B cell (primary cell): ENCODE measurements at regions of chr3 and their contacts with region 1.

Region 1: GRCh38 chr3:124688581-124689454 is 41.4 kb upstream of the UMPS start:
- DNase-seq: peak; percentile 72
- ATAC-seq: peak; percentile 58
- H3K4me3 ChIP-seq: no peak overlapping the region
- H3K4me3 Mint-ChIP-seq: no peak overlapping the region
- H3K27ac ChIP-seq: no peak overlapping the region
- H3K27ac Mint-ChIP-seq: no peak overlapping the region
- H3K4me1 ChIP-seq: no peaks in the 10 kb centered on the region
- H3K4me1 Mint-ChIP-seq: peaks cover 4% of the 10 kb centered on the region
- H3K27me3 ChIP-seq: peaks cover 0 to 4% (median 0%) of the 10 kb centered on the region in 4 experiments
- H3K27me3 Mint-ChIP-seq: peaks cover 28% of the 10 kb centered on the region
- CTCF ChIP-seq: peak; percentile 93

Region 2: DNA sequence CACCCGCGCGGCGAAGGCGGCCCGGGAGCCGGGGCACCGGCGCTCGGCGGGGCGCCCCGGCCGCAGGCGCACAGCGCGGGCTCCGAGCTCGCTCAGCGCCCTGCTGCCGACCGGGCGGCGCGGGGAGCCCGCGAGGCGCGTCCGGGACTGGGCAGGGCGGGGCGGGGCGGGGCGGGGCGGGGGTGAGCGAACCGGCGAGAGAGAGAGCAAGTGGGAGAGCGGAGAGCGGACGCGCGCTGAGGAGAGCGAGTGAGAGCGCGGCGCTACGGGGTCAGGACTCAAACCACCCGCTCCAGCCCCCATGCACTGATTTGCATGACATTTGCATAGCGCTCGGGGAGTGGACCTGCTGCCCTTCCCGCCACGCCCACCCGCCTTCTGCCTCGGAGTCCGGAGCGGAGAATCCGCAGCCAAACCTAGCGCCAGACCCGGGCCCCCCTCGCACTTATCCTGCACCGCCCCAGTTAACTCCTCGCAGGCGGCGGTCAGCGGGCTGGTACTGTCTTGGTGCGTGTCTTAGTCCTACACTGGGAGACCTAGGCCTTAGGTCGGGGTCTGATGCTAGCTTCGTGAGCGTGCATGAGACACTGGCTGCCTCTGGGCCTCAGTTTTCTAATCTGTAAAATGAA is 804.5 kb before region 1 on chr3 and contains the start of gene MYLK:
- CTCF ChIA-PET with region 1: no interaction called
- POLR2A ChIA-PET with region 1: no interaction called
- intact Hi-C with region 1: no loop called
- DNase-seq: peak; percentile 40
- ATAC-seq: peak; percentile 71
- H3K4me3 ChIP-seq: peak within 1 kb of the TSS in 3 of 5 experiments; percentile 14 to 29 (median 21)
- H3K4me3 Mint-ChIP-seq: peak within 1 kb of the TSS; percentile 83
- H3K27ac ChIP-seq: no peak within 1 kb of the TSS
- H3K27ac Mint-ChIP-seq: no peak within 1 kb of the TSS
- H3K4me1 ChIP-seq: peaks cover 8 to 16% of the 10 kb centered on the region in 2 donors
- H3K4me1 Mint-ChIP-seq: peaks cover 16% of the 10 kb centered on the region
- H3K27me3 ChIP-seq: peaks cover 0 to 36% (median 8%) of the 10 kb centered on the region in 4 experiments
- H3K27me3 Mint-ChIP-seq: peaks cover 43% of the 10 kb centered on the region
- CTCF ChIP-seq: no peak
- total RNA-seq, gene MYLK: not detected in 2 replicates

Region 3: DNA sequence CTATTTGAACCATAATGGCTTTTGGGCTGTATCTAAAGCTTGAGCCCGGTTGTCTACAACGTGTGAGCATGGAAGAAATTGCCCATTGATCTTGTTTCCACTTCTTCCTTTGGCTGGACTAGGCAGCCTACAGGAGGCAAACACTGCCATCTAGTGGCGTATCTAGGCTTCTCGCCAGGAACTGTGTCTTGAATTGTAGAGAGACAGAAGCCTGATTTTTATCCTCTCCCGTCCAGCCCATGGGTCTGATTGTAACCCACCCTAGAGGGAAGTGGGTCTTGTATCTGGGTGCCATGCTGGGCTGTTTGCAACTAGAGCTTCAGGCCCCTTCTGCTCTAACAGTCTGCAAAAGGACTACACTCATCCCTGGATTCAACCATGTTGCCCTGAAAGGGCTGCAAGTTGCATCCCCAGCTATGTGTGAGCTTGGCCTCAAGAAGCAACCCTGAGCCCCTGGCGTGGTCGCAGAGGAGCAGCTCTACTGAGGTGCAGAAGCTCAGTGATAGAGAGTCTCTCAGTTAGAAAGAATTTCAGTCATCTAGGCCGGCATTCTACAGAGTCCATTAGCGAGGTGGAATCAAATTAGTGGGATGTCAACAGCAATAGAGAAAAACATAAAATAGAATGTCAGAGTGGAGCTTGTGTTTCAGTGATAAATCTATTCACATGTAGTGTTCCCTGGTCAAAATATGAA is 128.8 kb before region 1 on chr3:
- CTCF ChIA-PET with region 1: interaction called, 145 read pairs
- POLR2A ChIA-PET with region 1: no interaction called
- intact Hi-C with region 1: loop called (anchors 1 kb)
- DNase-seq: peak; percentile 60
- ATAC-seq: peak; percentile 63
- H3K4me3 ChIP-seq: no peak overlapping the region
- H3K4me3 Mint-ChIP-seq: no peak overlapping the region
- H3K27ac ChIP-seq: no peak overlapping the region
- H3K27ac Mint-ChIP-seq: no peak overlapping the region
- H3K4me1 ChIP-seq: no peaks in the 10 kb centered on the region
- H3K4me1 Mint-ChIP-seq: no peaks in the 10 kb centered on the region
- H3K27me3 ChIP-seq: peaks cover 0 to 5% (median under 1%) of the 10 kb centered on the region in 4 experiments
- H3K27me3 Mint-ChIP-seq: peaks cover 44% of the 10 kb centered on the region
- CTCF ChIP-seq: peak; percentile 92

Region 4: DNA sequence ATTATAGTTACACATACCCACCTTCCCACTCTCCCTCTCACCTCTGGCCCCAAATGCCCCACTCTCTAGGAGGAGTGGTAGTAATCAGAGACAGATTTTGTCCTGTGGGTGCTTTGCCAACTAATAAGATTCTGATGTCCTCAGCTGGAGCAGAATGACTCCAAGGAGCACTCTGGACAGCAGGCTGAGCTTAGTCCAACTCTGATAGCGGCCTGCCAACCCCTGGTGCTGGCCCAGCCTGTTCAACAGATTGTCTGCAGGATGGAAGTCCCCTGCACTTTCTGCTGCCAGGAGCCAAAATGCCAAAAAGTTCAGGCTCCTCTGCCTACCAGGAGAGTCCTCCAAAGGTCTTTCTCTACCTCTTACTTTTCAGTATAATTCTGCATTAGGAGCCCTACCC is 119.1 kb before region 1 on chr3:
- CTCF ChIA-PET with region 1: interaction called, 145 read pairs
- POLR2A ChIA-PET with region 1: no interaction called
- intact Hi-C with region 1: loop called (anchors 1 kb)
- DNase-seq: no peak
- ATAC-seq: no peak
- H3K4me3 ChIP-seq: no peak overlapping the region
- H3K4me3 Mint-ChIP-seq: no peak overlapping the region
- H3K27ac ChIP-seq: no peak overlapping the region
- H3K27ac Mint-ChIP-seq: no peak overlapping the region
- H3K4me1 ChIP-seq: no peaks in the 10 kb centered on the region
- H3K4me1 Mint-ChIP-seq: peaks cover 3% of the 10 kb centered on the region
- H3K27me3 ChIP-seq: peaks cover 0 to 6% (median 2%) of the 10 kb centered on the region in 4 experiments
- H3K27me3 Mint-ChIP-seq: no peaks in the 10 kb centered on the region
- CTCF ChIP-seq: no peak

Region 5: DNA sequence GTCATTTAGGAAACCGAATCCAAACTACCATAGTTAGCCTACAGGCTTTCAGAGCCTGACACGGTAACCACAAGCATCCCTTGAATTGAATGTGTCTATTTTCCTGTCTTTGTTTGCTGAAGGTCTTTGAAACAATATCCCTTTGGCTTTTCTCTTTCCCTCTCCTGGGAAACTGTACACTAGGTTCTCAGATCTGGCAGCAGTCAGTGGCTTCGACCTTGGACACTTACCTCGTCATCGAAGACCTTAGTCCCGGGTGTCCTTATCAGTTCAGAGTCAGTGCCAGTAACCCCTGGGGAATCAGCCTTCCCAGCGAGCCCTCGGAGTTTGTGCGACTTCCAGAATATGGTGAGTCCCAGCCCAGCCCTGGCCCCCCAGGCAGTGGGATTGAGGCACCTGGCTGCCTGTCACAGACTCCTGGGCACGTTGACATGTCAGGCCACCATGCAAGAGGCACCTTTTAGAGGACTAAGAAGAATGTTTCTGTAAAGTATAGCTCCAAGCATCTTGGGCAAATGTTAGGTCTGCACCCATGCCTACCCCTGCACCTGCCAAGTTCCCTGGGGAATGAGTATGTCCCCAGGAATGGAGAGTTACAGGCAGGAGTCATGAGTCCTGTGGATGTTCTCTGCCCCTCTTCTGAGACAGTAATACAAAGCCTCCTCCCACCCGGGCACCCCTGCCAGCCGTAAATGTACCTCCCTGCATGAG is 11.0 kb after region 1 on chr3:
- CTCF ChIA-PET with region 1: interaction called, 11 read pairs
- POLR2A ChIA-PET with region 1: no interaction called
- intact Hi-C with region 1: no loop called
- DNase-seq: no peak
- ATAC-seq: no peak
- H3K4me3 ChIP-seq: no peak overlapping the region
- H3K4me3 Mint-ChIP-seq: no peak overlapping the region
- H3K27ac ChIP-seq: no peak overlapping the region
- H3K27ac Mint-ChIP-seq: no peak overlapping the region
- H3K4me1 ChIP-seq: no peaks in the 10 kb centered on the region
- H3K4me1 Mint-ChIP-seq: no peaks in the 10 kb centered on the region
- H3K27me3 ChIP-seq: peaks cover 0 to 9% (median 2%) of the 10 kb centered on the region in 4 experiments
- H3K27me3 Mint-ChIP-seq: peaks cover 36% of the 10 kb centered on the region
- CTCF ChIP-seq: no peak